ENCODE measurements at regions of chrX and their contacts with region 1.

Region 1: DNA sequence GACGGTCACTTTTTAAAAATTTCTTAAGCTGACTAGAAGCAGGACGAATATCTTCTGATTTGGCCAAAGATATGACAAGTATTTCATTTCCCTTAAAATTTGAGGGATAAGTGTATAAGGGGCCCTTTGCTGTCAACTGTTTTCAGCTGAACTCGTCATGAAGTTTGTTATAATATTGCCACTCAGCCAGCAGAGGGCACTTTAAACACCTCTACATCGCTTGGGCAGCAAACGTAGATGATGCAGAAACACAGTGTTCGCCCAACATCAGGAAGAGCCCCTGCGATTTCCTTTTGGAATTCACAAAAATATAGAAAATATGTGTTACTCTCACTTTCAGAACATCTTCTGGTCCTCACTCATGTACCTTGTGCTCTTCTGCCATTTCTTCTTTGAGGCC is 435.7 kb upstream of the FMR1 start:
- DNase-seq: peak; percentile 8
- ATAC-seq: no peak
- H3K4me3 Mint-ChIP-seq: no peak overlapping the region
- H3K27ac Mint-ChIP-seq: no peak overlapping the region
- H3K4me1 Mint-ChIP-seq: no peaks in the 10 kb centered on the region
- H3K27me3 Mint-ChIP-seq: no peaks in the 10 kb centered on the region
- CTCF ChIP-seq: no peak

Region 2: DNA sequence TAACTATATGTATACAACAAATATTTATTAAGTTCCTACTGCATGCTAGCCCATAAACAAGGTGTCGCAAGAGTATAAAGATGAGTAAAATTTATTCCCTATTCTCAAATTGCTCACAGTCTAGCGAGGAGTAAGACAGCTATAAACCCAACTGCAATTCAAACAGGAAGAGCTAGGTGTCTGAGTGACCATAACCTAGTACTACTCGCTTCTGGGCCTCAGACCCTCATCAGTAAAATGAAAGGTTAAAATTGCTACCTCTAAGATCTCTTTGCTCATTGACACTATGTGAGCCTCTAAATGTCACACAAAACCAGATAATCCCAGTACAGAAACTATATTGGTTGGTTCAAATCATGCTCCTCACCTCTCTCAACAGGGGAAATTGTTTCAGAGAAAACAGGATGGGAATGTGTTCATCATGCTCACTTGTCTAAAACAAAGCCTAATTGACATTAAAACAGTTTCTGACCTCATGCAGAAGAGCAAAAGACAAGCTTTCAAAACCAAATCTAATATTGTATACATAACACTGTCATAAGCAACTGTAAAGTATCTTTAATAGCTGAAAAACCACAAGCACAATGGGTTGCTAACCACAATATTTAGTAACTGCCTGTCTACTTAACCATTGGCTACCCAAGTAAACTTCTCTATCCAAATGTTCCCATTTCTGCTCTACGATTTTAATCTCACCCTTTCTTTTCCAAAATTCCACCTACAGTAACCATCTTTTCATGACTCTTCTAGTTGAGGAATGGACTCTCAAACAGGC is 171.1 kb after region 1 on chrX:
- CTCF ChIA-PET with region 1: no interaction called
- POLR2A ChIA-PET with region 1: no interaction called
- intact Hi-C with region 1: no loop called
- DNase-seq: no peak
- ATAC-seq: no peak
- H3K4me3 Mint-ChIP-seq: no peak overlapping the region
- H3K27ac Mint-ChIP-seq: no peak overlapping the region
- H3K4me1 Mint-ChIP-seq: no peaks in the 10 kb centered on the region
- H3K27me3 Mint-ChIP-seq: no peaks in the 10 kb centered on the region
- CTCF ChIP-seq: no peak

Region 3: GRCh38 chrX:147803948-147804347 is 327.9 kb after region 1 on chrX:
- CTCF ChIA-PET with region 1: interaction called, 3 read pairs
- POLR2A ChIA-PET with region 1: no interaction called
- intact Hi-C with region 1: loop called (anchors 10 kb)
- DNase-seq: peak; percentile 8
- ATAC-seq: no peak
- H3K4me3 Mint-ChIP-seq: no peak overlapping the region
- H3K27ac Mint-ChIP-seq: no peak overlapping the region
- H3K4me1 Mint-ChIP-seq: no peaks in the 10 kb centered on the region
- H3K27me3 Mint-ChIP-seq: no peaks in the 10 kb centered on the region
- CTCF ChIP-seq: peak; percentile 47

Region 4: GRCh38 chrX:147838465-147839133 is 362.6 kb after region 1 on chrX:
- CTCF ChIA-PET with region 1: interaction called, 3 read pairs
- POLR2A ChIA-PET with region 1: no interaction called
- intact Hi-C with region 1: loop called (anchors 10 kb)
- DNase-seq: no peak
- ATAC-seq: no peak
- H3K4me3 Mint-ChIP-seq: no peak overlapping the region
- H3K27ac Mint-ChIP-seq: no peak overlapping the region
- H3K4me1 Mint-ChIP-seq: no peaks in the 10 kb centered on the region
- H3K27me3 Mint-ChIP-seq: peaks cover 4% of the 10 kb centered on the region
- CTCF ChIP-seq: peak; percentile 51

Region 5: DNA sequence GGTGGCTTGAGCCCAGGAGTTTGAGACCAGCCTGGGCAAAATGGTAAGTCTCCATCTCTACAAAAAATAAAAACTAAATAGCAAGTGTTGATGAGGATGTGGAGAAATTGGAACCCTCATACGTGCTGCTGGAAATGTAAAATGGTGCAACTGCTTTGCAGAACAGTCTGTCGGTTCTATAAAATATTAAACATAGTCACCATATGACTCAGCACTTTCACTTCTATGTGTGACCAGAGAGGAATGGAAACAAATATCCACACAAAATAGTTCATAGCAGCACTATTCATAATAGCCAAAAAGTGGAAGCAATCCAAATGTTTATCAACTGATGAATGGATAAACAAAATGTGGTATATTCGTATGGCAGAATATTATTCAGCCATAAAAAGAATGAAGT is 374.9 kb after region 1 on chrX:
- CTCF ChIA-PET with region 1: no interaction called
- POLR2A ChIA-PET with region 1: no interaction called
- intact Hi-C with region 1: no loop called
- DNase-seq: no peak
- ATAC-seq: no peak
- H3K4me3 Mint-ChIP-seq: no peak overlapping the region
- H3K27ac Mint-ChIP-seq: no peak overlapping the region
- H3K4me1 Mint-ChIP-seq: no peaks in the 10 kb centered on the region
- H3K27me3 Mint-ChIP-seq: peaks cover 2% of the 10 kb centered on the region
- CTCF ChIP-seq: no peak

Region 6: GRCh38 chrX:148080593-148080992 is 604.6 kb after region 1 on chrX:
- CTCF ChIA-PET with region 1: no interaction called
- POLR2A ChIA-PET with region 1: no interaction called
- intact Hi-C with region 1: no loop called
- DNase-seq: no peak
- ATAC-seq: no peak
- H3K4me3 Mint-ChIP-seq: no peak overlapping the region
- H3K27ac Mint-ChIP-seq: no peak overlapping the region
- H3K4me1 Mint-ChIP-seq: peaks cover 2% of the 10 kb centered on the region
- H3K27me3 Mint-ChIP-seq: no peaks in the 10 kb centered on the region
- CTCF ChIP-seq: no peak

Measured in activated CD8-positive, alpha-beta T cell treated with anti-CD3 and anti-CD28 coated beads for 36 hours (primary cell).